Breast epithelium (tissue), 4 donors: ENCODE measurements at regions of chr9 and their contacts with region 1.

Region 1: DNA sequence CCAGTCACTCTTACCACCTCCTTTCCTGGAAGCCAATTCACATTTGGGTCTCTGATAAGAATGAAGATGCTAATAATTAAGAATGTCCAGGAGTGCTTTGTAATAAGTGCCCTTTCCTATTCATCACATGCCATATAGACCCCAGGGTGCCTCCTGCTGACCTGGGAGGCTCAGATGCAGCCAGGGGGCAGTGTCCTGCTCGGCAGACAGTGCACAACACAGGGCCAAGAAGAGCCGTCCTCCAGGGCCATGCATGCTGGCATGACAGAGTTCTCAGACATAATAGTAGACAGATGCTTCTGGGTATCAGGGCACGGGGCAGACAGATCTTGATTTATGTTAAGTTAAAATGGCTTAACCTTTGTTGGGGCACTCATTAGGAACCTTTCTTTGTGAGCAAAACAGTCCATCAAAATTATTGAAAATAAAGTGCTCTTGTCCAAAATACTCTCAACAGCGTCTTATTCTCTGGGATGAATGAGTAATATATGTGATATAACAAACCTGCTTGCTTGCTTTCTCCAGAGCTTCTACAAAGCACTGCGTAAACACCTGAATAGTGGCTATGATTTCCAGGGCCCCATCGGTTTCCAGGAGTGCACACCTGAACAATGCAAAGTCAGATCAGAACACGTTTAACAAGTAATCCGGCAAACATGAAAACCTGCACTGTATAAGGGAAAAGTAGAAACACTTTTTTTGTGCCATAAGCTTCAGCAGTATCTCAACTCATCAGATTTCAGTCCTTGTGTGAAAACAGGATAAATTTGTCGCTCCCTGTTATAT is 192.7 kb downstream of the FANCC start:
- DNase-seq: no peak
- H3K4me3 ChIP-seq: no peak overlapping the region
- H3K27ac ChIP-seq: no peak overlapping the region
- H3K4me1 ChIP-seq: no peaks in the 10 kb centered on the region
- H3K27me3 ChIP-seq: no peaks in the 10 kb centered on the region
- CTCF ChIP-seq: no peak
- POLR2A ChIP-seq: no peak

Region 2: GRCh38 chr9:94773655-94774054 is 351.1 kb before region 1 on chr9:
- intact Hi-C with region 1: loop called (anchors 2 kb)
- DNase-seq: no peak
- H3K4me3 ChIP-seq: no peak overlapping the region
- H3K27ac ChIP-seq: no peak overlapping the region
- H3K4me1 ChIP-seq: no peaks in the 10 kb centered on the region
- H3K27me3 ChIP-seq: no peaks in the 10 kb centered on the region
- CTCF ChIP-seq: no peak
- POLR2A ChIP-seq: no peak

Region 3: DNA sequence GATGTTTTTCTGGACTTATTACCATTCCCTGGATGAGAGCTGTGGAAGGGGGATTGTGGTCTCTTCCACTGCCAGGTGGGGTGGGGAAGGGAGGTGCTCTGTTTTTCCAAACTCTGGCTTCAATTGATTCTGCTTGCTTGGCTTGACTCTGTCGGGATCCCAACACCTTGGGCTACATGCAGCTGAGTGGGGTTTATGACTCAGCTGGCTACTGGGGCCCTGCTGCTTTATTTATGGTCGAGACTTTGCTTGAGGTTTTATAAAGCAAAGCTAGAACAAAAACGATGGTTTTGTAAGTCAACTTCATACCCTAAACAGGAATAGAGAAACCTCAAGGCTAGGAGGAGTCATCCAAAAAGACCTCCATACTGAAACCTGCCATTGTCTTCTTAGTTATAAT is 322.0 kb before region 1 on chr9:
- intact Hi-C with region 1: no loop called
- DNase-seq: no peak
- H3K4me3 ChIP-seq: no peak overlapping the region
- H3K27ac ChIP-seq: peak overlapping the region; percentile 41 to 57
- H3K4me1 ChIP-seq: no peaks in the 10 kb centered on the region
- H3K27me3 ChIP-seq: no peaks in the 10 kb centered on the region
- CTCF ChIP-seq: no peak
- POLR2A ChIP-seq: no peak

Region 4: DNA sequence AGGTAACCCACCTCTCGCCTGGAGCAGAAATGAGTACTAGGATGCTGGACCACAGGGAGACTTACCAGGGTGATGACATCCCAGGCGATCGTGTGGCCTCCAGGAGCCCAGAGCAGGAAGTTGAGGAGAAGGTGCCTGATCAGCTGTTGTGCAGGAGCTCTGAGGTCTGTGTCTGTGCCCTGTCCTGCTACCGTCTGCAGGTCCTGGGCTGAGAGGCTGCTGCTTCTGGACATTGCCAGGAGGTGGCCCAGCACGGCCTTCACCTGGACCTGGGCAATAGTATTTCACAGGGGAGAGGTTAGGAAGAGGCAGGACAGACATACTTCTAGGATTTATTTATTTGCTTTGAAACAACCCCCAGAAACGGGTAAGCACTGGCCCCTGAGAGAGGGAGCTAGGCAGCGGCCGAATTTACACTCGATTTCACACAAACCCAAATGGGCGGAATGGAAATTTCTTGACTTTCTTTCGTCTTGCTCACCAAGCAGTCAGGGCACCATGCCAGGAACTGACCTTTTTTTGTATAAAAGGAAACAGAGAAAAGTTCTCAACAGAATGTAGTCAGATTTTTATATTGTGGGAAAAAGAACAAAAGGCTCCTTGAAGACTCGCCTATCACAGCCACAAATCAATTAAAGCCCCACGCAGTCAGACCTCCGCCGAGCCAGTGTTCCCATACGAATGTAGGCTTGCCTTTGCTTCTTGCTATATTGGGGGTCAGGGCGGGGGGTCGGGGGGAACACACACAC is 17.6 kb before region 1 on chr9:
- intact Hi-C with region 1: no loop called
- DNase-seq: peak in 1 of 2 donors; percentile 46
- H3K4me3 ChIP-seq: no peak overlapping the region
- H3K27ac ChIP-seq: no peak overlapping the region
- H3K4me1 ChIP-seq: no peaks in the 10 kb centered on the region
- H3K27me3 ChIP-seq: no peaks in the 10 kb centered on the region
- CTCF ChIP-seq: no peak
- POLR2A ChIP-seq: no peak

Region 5: DNA sequence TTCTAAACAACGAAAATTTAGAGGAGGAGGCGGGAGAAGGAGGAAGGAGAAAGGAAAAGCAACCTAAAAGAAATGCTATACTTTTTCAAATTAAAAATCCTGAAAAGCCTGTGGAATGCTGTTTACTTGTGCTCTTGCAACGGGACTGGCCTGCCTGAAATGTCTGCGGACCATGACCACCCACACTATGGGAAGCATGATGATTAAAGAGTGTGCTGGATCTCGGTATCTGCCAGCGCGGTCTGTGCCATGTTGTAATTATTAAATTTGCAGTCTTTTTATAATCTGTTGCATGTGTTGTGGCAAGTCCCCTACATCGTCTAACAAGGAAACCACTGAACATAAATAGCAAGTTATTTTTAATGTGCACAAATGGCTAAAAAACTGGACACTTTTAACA is 81.4 kb after region 1 on chr9:
- intact Hi-C with region 1: no loop called
- DNase-seq: no peak
- H3K4me3 ChIP-seq: no peak overlapping the region
- H3K27ac ChIP-seq: no peak overlapping the region
- H3K4me1 ChIP-seq: no peaks in the 10 kb centered on the region
- H3K27me3 ChIP-seq: no peaks in the 10 kb centered on the region
- CTCF ChIP-seq: no peak
- POLR2A ChIP-seq: no peak